ENCODE measurements at regions of chr2 and their contacts with region 1.

Region 1: GRCh38 chr2:41759880-41760279 is 287.9 kb upstream of the PKDCC start:
- DNase-seq: no peak
- H3K4me3 ChIP-seq: no peak overlapping the region
- H3K27ac ChIP-seq: no peak overlapping the region
- H3K4me1 ChIP-seq: no peaks in the 10 kb centered on the region
- H3K27me3 ChIP-seq: no peaks in the 10 kb centered on the region
- CTCF ChIP-seq: no peak
- POLR2A ChIP-seq: no peak

Region 2: DNA sequence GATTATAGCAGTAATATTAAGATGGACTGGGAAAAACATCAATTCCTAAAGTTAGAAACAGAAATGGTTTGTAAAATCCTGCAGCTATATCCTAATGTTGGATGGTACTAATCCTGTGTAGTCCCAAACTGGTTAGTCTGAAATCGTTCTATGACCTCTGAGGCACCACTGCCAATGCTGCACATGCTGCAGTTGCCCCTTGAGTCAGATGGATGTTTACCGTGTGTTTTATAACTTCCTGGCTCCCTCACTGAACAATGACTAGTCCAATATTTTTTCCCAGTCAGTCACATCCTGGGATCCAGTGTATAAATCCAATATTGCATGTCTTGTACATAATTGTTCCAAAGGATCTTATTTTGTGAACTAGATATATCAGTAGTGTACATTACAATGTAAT is 61.3 kb after region 1 on chr2:
- intact Hi-C with region 1: no loop called
- DNase-seq: no peak
- H3K4me3 ChIP-seq: no peak overlapping the region
- H3K27ac ChIP-seq: no peak overlapping the region
- H3K4me1 ChIP-seq: no peaks in the 10 kb centered on the region
- H3K27me3 ChIP-seq: peaks cover 0 to 3% of the 10 kb centered on the region in 2 donors
- CTCF ChIP-seq: no peak
- POLR2A ChIP-seq: no peak

Region 3: GRCh38 chr2:42569883-42570282 is 810.0 kb after region 1 on chr2:
- intact Hi-C with region 1: loop called (anchors 10 kb)
- DNase-seq: no peak
- H3K4me3 ChIP-seq: peak overlapping the region; percentile 77 to 92 (median 85)
- H3K27ac ChIP-seq: peak overlapping the region in 1 of 2 donors; percentile 93
- H3K4me1 ChIP-seq: peaks cover 0 to 5% of the 10 kb centered on the region in 2 donors
- H3K27me3 ChIP-seq: no peaks in the 10 kb centered on the region
- CTCF ChIP-seq: no peak
- POLR2A ChIP-seq: no peak